Panc1 (cell line): ENCODE measurements at regions of chr6 and their contacts with region 1.

Region 1: GRCh38 chr6:159169557-159170332 is 545 bp downstream of the FNDC1 start:
- DNase-seq: no peak
- ATAC-seq: peak; percentile 51
- H3K4me3 ChIP-seq: peak overlapping the region; percentile 25 to 44
- H3K27ac ChIP-seq: no peak overlapping the region
- H3K4me1 ChIP-seq: peaks cover 8% of the 10 kb centered on the region
- H3K27me3 ChIP-seq: peaks cover 39% of the 10 kb centered on the region
- CTCF ChIP-seq: no peak; the same call in 1 of the 2 replicates

Region 2: DNA sequence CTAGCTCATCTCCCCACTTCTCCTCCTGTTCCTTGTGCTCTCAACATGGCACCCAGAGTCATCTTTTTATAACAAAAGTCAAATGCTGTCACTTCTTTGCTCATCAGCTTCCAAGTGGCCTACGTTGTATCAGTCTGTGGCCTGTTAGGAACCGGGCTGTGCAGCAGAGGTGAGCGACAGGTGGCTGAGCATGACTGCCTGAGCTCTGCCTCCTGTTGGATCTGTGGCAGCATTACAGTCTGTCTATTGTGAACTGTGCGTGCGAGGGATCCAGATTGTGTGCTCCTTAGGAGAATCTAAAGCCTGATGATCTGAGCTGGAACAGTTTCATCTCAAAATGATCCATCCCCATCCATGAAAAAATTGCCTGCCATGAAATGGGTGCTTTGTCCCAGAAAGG is 129.1 kb after region 1 on chr6:
- CTCF ChIA-PET with region 1: no interaction called
- POLR2A ChIA-PET with region 1: no interaction called
- in situ Hi-C with region 1: no loop called
- intact Hi-C with region 1: no loop called
- DNase-seq: no peak
- ATAC-seq: no peak
- H3K4me3 ChIP-seq: no peak overlapping the region
- H3K27ac ChIP-seq: no peak overlapping the region
- H3K4me1 ChIP-seq: no peaks in the 10 kb centered on the region
- H3K27me3 ChIP-seq: peaks cover 26% of the 10 kb centered on the region
- CTCF ChIP-seq: no peak

Region 3: GRCh38 chr6:159378411-159379328 is 208.9 kb after region 1 on chr6:
- CTCF ChIA-PET with region 1: no interaction called
- POLR2A ChIA-PET with region 1: no interaction called
- in situ Hi-C with region 1: no loop called
- intact Hi-C with region 1: no loop called
- DNase-seq: no peak
- ATAC-seq: no peak
- H3K4me3 ChIP-seq: no peak overlapping the region
- H3K27ac ChIP-seq: no peak overlapping the region
- H3K4me1 ChIP-seq: no peaks in the 10 kb centered on the region
- H3K27me3 ChIP-seq: peaks cover 12% of the 10 kb centered on the region
- CTCF ChIP-seq: no peak

Region 4: DNA sequence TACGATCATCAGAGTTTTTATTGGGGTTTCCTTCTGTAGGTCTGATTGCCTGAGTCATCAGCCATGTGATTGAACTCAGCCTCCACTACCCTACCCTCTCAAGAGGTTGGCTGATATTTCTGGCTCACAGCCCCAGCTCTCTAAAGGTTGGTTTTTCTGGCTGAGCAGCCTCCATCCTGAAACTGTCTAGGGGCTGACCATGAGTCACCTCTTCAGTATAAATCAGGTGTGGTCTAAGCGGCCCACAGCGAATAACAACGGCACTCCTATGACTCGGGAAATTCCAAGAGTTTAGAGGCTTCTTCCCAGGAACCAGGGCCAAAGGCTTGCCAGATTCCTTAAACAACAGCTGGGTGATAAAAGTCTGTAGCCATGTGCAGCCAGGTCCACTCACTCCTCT is 407.8 kb after region 1 on chr6:
- CTCF ChIA-PET with region 1: interaction called, 11 read pairs
- POLR2A ChIA-PET with region 1: no interaction called
- in situ Hi-C with region 1: no loop called
- intact Hi-C with region 1: no loop called
- DNase-seq: no peak
- ATAC-seq: no peak; the same call in 1 of the 2 replicates
- H3K4me3 ChIP-seq: no peak overlapping the region
- H3K27ac ChIP-seq: no peak overlapping the region
- H3K4me1 ChIP-seq: no peaks in the 10 kb centered on the region
- H3K27me3 ChIP-seq: 0 out of 2 replicates have a peak, but pooled peaks cover 2% of the 10 kb centered on the region
- CTCF ChIP-seq: no peak

Region 5: DNA sequence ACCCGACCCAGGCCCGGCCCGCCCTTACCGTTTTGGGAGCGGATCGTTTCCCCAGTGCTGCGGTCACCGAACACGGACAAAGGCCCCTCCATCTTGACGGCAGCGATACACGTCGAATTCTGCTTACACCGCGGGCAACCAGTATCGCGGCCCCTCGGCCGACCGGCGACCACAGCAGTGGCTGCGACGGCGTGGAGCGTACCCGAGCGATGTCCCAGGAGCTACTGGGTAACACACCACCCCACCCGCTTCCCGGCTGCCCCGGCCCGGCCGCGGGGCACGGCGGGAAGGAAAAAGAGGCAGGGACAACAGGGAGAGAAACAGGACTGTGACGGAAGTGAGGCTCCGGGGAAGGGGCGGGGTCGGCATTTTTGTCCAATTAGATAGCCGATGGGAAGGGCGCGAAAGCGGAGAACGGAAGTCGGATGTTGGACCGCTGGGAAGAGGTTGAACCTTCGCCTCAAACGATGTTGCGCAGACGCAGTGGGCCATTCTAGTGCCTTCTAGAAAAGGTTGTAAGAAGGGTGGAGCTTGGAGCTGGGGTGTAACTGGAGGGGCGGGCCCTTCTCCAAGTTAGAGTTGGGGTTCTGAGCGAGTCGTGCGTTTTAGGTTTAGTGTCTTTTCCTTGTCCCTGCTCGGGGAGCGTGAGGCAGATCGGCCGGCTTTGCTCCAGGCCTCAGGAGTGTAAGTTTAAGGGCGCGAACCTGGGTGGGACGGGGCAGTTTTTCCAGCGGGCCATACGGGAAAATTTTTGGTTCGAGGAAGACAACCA is 619.8 kb after region 1 on chr6 and contains the start of gene TCP1:
- CTCF ChIA-PET with region 1: no interaction called
- POLR2A ChIA-PET with region 1: no interaction called
- in situ Hi-C with region 1: no loop called
- intact Hi-C with region 1: no loop called
- DNase-seq: peak; percentile 96
- ATAC-seq: peak; percentile 93
- H3K4me3 ChIP-seq: peak within 1 kb of the TSS; percentile 98 to 99
- H3K27ac ChIP-seq: peak within 1 kb of the TSS; percentile 99
- H3K4me1 ChIP-seq: peaks cover 28% of the 10 kb centered on the region; the same call in 1 of the 2 replicates
- H3K27me3 ChIP-seq: no peaks in the 10 kb centered on the region
- CTCF ChIP-seq: no peak
- total RNA-seq, gene TCP1: 340 TPM